CD4-positive, alpha-beta memory T cell (primary cell): ENCODE measurements at regions of chr7 and their contacts with region 1.

Region 1: DNA sequence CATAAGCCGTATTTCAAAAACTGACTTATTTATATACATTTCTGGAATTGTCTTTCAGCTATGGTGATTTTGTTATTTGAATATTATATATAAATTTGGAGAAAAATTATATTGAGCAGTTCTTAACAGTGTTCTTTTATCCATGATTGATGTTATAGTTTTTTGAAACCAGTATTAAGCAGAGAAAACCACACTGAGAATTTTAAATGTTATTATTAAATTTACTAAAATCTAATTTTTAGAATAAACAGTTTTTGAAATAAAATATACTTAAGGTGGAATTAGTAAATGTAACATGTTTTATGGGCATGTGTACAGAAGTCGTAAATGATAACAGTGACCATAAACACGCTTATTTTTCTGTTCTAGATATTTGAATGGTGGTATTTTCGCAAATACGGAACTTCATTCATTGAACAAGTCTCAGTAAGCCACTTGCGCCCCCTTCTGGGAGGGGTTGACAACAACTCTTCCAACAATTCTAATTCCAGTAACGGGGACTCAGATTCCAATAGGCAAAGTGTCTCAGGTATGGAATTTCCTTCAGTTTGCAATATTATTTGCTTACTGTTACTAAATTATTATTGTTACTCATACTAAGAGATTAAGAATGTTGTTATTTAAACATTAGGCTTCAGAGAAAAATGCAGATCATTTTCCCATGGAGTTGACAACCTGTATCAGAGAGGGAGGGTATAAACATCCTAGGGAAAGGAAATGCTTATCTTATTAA is 166.1 kb downstream of the ST7 start:
- DNase-seq: peak; percentile 63 to 74 (median 68)
- H3K4me3 ChIP-seq: no peak overlapping the region
- H3K4me3 Mint-ChIP-seq: no peak overlapping the region
- H3K27ac ChIP-seq: no peak overlapping the region
- H3K27ac Mint-ChIP-seq: no peak overlapping the region
- H3K4me1 ChIP-seq: no peaks in the 10 kb centered on the region
- H3K4me1 Mint-ChIP-seq: no peaks in the 10 kb centered on the region
- H3K27me3 ChIP-seq: no peaks in the 10 kb centered on the region
- H3K27me3 Mint-ChIP-seq: no peaks in the 10 kb centered on the region

Region 2: GRCh38 chr7:116543664-116544063 is 575.7 kb before region 1 on chr7:
- CTCF ChIA-PET with region 1: no interaction called
- POLR2A ChIA-PET with region 1: no interaction called
- intact Hi-C with region 1: no loop called
- DNase-seq: no peak
- H3K4me3 ChIP-seq: no peak overlapping the region
- H3K4me3 Mint-ChIP-seq: no peak overlapping the region
- H3K27ac ChIP-seq: no peak overlapping the region
- H3K27ac Mint-ChIP-seq: no peak overlapping the region
- H3K4me1 ChIP-seq: no peaks in the 10 kb centered on the region
- H3K4me1 Mint-ChIP-seq: no peaks in the 10 kb centered on the region
- H3K27me3 ChIP-seq: no peaks in the 10 kb centered on the region
- H3K27me3 Mint-ChIP-seq: peaks cover 14 to 23% of the 10 kb centered on the region in 2 donors

Region 3: GRCh38 chr7:116969371-116969902 is 149.9 kb before region 1 on chr7:
- CTCF ChIA-PET with region 1: no interaction called
- POLR2A ChIA-PET with region 1: no interaction called
- intact Hi-C with region 1: no loop called
- DNase-seq: no peak
- H3K4me3 ChIP-seq: no peak overlapping the region
- H3K4me3 Mint-ChIP-seq: no peak overlapping the region
- H3K27ac ChIP-seq: no peak overlapping the region
- H3K27ac Mint-ChIP-seq: no peak overlapping the region
- H3K4me1 ChIP-seq: no peaks in the 10 kb centered on the region
- H3K4me1 Mint-ChIP-seq: peaks cover 0 to 2% (median 0%) of the 10 kb centered on the region in 4 donors
- H3K27me3 ChIP-seq: no peaks in the 10 kb centered on the region
- H3K27me3 Mint-ChIP-seq: peaks cover 0 to 1% of the 10 kb centered on the region in 2 donors

Region 4: DNA sequence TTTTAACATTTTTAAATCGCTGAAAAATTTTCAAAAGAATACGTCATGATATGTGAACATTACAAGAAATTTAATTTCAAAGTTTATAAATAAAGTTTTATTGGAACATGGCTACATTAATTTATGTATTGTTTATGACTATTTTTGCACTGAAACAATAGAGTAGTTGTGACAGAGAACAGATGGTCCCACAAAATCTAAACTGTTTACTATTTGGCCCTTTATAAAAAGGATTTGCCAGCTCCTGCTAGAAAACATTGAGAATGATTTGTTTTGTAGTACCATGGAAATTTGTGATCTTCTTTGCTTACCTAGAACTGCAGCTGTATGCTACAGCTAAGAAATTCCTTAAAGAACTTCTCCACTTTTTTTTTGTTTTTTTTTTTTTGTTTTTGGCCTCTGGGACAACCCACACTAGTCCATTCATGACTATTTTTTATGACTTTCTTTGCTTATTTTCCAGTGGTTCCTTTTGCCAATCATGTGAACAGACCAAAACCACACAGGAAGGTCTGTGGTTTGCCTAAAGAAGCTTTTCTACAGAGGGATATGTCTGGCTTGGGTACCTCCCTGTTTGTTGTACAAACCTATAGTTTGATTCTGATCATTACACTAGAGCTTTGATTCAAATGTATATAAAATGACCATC is 110.4 kb before region 1 on chr7:
- CTCF ChIA-PET with region 1: interaction called, 17 read pairs
- POLR2A ChIA-PET with region 1: no interaction called
- intact Hi-C with region 1: no loop called
- DNase-seq: peak; percentile 47 to 63 (median 54)
- H3K4me3 ChIP-seq: no peak overlapping the region
- H3K4me3 Mint-ChIP-seq: peak overlapping the region; percentile 6 to 84 (median 64)
- H3K27ac ChIP-seq: no peak overlapping the region
- H3K27ac Mint-ChIP-seq: peak overlapping the region in 3 of 7 donors; percentile 23 to 92 (median 78)
- H3K4me1 ChIP-seq: peaks cover 69% of the 10 kb centered on the region
- H3K4me1 Mint-ChIP-seq: peaks cover 50 to 57% (median 52%) of the 10 kb centered on the region in 4 donors
- H3K27me3 ChIP-seq: no peaks in the 10 kb centered on the region
- H3K27me3 Mint-ChIP-seq: no peaks in the 10 kb centered on the region

Region 5: DNA sequence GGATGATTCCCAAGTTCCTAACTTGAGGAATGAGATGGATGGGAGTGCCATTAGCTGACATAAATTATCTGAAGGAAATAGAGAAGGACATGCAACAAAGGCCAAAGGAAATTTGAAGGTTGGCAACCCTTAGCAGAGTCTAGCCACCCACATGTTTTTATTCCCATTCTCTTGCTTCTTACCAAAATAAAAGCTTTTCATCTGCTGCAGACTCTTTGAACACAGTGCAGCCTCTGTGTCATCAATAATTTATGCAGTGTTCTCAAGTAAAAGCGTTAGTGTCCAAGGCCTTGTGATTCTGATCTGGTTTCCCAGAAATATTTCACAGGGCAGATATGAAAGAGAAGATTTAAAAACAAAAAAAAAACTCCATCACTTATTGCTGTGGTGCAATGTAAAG is 67.5 kb before region 1 on chr7:
- CTCF ChIA-PET with region 1: interaction called, 3 read pairs
- POLR2A ChIA-PET with region 1: no interaction called
- intact Hi-C with region 1: loop called (anchors 10 kb)
- DNase-seq: no peak
- H3K4me3 ChIP-seq: no peak overlapping the region
- H3K4me3 Mint-ChIP-seq: no peak overlapping the region
- H3K27ac ChIP-seq: no peak overlapping the region
- H3K27ac Mint-ChIP-seq: no peak overlapping the region
- H3K4me1 ChIP-seq: peaks cover 19% of the 10 kb centered on the region
- H3K4me1 Mint-ChIP-seq: peaks cover 17 to 32% (median 19%) of the 10 kb centered on the region in 4 donors
- H3K27me3 ChIP-seq: no peaks in the 10 kb centered on the region
- H3K27me3 Mint-ChIP-seq: no peaks in the 10 kb centered on the region

Region 6: GRCh38 chr7:117134889-117135552 is 15.7 kb after region 1 on chr7:
- CTCF ChIA-PET with region 1: interaction called, 17 read pairs
- POLR2A ChIA-PET with region 1: no interaction called
- intact Hi-C with region 1: no loop called
- DNase-seq: no peak
- H3K4me3 ChIP-seq: no peak overlapping the region
- H3K4me3 Mint-ChIP-seq: no peak overlapping the region
- H3K27ac ChIP-seq: no peak overlapping the region
- H3K27ac Mint-ChIP-seq: no peak overlapping the region
- H3K4me1 ChIP-seq: no peaks in the 10 kb centered on the region
- H3K4me1 Mint-ChIP-seq: peaks cover 0 to 10% (median 6%) of the 10 kb centered on the region in 4 donors
- H3K27me3 ChIP-seq: no peaks in the 10 kb centered on the region
- H3K27me3 Mint-ChIP-seq: no peaks in the 10 kb centered on the region

Region 7: DNA sequence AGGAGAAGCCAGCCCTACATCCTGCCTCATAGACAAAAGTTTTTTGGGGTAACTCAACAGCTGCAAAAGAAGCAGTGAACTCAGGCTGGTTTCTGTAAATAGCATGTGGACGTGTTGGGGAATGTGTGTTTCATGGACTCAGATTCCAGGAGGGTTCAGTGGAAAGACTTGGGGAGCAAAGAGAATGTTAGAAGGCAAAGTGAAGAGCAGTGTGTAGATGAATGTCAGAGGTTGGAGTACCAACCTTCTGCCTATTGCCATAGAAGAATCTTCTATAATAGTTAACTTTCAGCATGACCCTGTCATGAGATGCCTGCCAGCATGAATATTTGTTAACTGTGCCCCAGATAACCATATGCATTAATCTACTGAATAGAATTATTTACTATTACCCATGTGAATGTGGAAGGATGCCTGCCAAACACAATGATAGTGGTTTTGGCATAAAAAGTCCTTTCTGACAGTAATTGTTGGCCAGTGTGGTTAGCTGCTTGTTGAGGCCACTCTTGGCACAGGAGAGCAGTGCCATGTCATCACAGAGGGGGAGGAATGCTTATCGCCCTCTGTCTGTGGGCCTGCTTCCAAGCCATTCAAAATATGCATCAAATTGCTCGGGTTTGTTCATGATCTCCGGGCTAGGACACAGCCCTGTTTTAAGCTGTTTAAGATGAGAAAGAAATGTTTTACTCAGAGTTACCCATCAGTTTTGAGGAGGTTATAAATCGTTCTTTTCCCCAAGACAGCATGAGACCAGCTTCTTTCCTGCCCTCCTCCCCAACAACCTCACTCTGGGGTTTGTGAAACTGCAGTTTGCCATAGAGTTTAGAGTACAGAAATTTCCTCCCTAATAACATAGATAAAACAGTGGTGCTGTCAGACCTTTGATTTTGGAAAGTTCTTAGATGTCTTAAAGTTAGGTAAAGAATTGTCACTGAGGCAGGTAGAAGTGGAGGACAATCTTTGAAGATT is 38.2 kb after region 1 on chr7:
- CTCF ChIA-PET with region 1: no interaction called
- POLR2A ChIA-PET with region 1: no interaction called
- intact Hi-C with region 1: no loop called
- DNase-seq: no peak
- H3K4me3 ChIP-seq: no peak overlapping the region
- H3K4me3 Mint-ChIP-seq: no peak overlapping the region
- H3K27ac ChIP-seq: no peak overlapping the region
- H3K27ac Mint-ChIP-seq: no peak overlapping the region
- H3K4me1 ChIP-seq: no peaks in the 10 kb centered on the region
- H3K4me1 Mint-ChIP-seq: no peaks in the 10 kb centered on the region
- H3K27me3 ChIP-seq: no peaks in the 10 kb centered on the region
- H3K27me3 Mint-ChIP-seq: no peaks in the 10 kb centered on the region